ENCODE measurements at regions of chr4 and their contacts with region 1.

Region 1: DNA sequence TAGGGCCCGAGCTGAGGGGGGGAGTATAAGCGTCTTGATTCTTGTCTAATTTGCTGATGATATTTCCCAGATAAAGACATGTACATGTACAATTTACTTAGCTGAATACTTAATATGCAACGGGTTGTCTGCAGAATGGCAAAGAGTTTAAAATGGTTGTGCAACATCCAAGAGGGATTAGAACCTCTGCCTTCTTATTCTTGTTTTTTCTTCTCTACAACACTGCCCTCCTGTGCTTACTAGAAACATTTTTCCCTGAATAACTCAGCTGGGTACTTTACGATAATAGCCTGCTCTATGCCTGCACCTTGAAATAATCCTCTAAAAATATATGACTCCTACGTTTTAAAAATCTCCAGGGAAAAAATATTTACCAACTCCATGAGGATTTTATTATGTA is 41.8 kb downstream of the INTS12 start:
- DNase-seq: peak; percentile 10
- H3K27ac ChIP-seq: no peak overlapping the region
- CTCF ChIP-seq: no peak

Region 2: DNA sequence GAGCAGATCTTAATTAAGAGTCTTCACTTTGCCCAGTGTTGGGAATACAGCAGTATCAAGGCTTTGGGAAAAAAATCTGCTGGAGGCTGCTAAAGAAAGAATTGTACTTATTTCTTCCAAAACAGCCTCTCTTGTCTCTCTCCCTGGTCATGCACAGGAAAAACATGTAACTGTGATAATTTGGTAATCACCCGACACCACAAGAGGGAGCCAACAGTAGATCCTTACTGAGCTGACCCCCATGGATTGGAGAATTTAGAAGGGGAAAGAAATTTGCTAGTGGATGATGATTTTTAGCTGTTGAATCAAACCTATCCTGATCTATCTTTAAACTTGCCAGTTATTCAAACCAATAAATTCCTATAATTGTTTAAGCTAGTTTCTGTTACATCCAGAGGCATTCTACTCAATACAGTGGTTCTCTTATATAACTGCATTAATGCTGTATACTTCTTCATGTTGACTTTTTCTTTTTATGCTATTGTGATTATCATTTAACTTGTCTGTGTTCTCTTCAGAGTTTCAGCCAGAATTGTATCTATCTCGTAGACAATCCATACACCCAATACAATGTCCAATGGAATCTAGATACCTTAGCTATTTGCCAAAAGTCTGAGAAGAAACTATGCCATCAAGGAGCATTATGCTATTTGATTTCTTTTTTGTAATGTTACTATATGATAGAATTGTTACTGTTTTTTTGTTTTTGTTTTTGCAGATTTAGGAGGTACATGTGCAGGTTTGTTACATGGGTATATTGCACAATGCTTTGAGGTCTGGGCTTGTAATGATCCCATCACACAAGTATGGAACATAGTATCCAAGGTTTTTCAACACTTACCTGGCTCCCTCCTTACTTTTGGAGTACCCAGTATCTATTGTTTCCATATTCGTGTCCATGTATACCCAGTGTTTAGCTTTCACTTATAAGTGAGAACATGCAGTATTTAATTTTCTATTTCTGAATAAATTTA is 145.6 kb before region 1 on chr4:
- CTCF ChIA-PET with region 1: interaction called, 30 read pairs
- POLR2A ChIA-PET with region 1: no interaction called
- DNase-seq: peak; percentile 53
- H3K27ac ChIP-seq: no peak overlapping the region
- CTCF ChIP-seq: peak; percentile 59

Region 3: DNA sequence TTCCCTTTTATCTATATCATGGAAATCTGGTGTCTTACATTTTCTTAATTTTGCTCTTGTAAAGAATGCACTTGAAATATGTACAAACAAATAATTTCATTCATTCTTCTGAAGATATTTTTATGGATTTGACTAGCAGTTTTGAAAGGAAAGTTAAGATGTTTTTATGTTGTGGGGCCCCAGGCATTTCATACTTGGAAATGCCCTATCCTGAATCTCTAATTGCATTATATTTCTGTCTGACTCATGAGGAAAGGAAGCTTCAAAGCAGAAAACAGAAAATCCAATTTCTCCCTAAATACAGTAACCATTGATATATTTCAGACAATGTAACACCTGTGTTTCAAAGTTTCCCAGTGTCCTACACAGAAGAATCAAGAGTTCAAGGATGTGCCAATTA is 155.4 kb after region 1 on chr4:
- CTCF ChIA-PET with region 1: no interaction called
- POLR2A ChIA-PET with region 1: no interaction called
- DNase-seq: no peak
- H3K27ac ChIP-seq: no peak overlapping the region
- CTCF ChIP-seq: no peak

Region 4: DNA sequence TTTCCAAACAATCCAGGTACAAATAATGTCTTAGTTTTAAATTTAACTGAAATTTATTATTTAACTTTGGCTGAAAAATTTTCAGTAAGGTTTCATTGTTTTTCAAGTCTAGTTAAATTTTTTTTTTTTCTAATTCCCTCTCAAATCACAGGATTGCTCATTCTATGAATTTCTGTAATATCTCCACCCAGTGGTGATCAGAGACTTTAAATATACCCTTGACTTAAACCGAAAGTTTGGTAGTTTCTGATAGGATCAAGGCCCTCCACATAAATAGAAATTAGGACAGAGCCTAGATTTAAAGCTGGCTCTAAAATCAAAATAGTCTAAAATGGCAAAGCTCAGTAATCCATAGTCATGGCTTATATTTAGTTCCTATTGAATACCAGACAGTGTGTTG is 473.9 kb after region 1 on chr4:
- CTCF ChIA-PET with region 1: no interaction called
- POLR2A ChIA-PET with region 1: no interaction called
- DNase-seq: no peak
- H3K27ac ChIP-seq: no peak overlapping the region
- CTCF ChIP-seq: 0 out of 2 replicates have a peak, but pooled peaks have one; percentile 4

Measured in RWPE1 (cell line).